ENCODE measurements at regions of chr6 and their contacts with region 1.

Region 1: GRCh38 chr6:52829046-52829817 is 11.4 kb downstream of the GSTA5 start:
- DNase-seq: no peak
- ATAC-seq: no peak

Region 2: DNA sequence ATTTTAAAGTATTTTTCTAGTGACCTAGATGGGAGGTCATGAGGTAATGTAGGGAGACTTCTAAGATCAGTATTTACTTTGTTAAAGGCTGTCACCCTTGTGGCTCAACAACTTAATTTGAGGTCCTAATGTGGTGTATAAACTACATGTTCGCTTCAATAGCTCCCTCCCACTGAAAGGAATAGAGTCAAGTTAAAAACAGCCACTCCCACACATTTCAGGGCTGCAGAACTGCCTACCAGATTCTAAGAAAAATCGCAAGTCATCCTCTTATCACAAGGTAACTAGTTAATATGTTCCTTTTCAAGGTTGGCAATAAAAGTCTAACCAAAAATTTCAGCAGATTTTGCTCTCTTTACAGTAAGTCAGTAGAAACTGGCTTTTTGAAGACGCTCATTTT is 40.8 kb before region 1 on chr6:
- intact Hi-C with region 1: loop called (anchors 5 kb)
- DNase-seq: no peak
- ATAC-seq: no peak